Left ventricle myocardium superior (tissue), 1 donor: ENCODE measurements at regions of chr1 and their contacts with region 1.

Region 1: DNA sequence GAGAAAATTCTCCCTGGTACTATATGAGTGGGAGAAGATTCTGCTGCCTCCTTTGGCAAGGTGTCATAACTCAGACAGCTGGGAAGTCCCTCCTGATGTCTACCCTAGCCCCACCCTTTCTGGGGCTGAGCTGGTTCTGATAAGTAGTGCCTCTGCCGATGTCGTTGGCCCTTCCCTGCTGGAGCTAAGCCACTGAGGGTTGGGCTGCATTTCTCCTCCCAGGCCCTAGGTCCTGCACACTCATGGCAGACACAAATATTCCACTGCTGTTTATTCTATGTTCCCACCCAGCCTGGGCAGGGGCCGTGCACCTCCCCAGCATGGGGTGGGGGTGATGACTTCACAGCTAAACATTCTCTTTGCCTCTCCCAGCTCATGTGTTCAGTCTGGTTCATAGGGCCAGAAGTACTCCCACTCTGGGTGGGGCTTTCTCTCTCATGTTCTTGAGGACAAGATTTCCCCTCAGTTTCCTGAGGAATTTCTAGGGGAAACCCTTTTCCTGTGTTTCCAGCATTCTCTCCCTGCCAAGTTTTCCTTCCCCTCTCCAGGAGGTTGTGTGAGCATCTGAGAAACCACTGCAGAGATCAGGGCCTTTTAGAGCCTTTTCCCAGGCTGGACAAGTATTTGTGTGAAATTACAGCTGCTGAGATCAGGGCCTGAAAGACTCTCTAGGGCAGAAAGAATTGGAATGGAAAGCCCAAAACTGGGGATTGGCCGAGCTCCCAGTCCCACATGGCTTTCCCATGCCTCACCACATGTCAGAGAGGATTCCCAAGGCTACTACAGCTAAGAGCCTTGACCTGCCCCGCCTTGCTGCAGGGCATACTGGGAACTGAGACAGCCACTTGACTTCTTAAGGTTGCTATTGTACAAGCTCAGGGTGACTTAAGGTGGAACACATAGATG is 66.2 kb downstream of the ATP2B4 start:
- DNase-seq: peak; percentile 87
- ATAC-seq: peak; percentile 87

Region 2: DNA sequence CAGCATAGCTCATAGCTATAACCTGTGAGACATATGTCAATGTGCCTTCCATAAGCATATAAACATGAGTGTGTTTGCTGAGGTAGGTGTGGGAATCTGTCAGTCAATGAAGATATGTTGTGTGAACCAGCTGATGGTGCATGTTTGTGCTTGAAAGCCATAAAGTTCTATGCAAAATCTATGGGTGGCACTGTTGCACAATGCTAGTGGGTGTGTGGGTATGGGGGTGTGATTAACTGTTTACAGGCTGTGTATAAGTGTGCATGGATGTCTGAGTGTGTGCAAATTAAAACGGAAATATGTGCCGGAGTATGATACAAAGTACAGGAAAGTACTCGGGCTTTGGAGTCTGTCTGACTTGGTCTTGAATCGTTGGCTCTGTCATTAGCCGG is 67.2 kb before region 1 on chr1:
- intact Hi-C with region 1: loop called (anchors 5 kb)
- DNase-seq: no peak
- ATAC-seq: peak; percentile 43

Region 3: GRCh38 chr1:203663294-203663693 is 29.5 kb before region 1 on chr1:
- intact Hi-C with region 1: no loop called
- DNase-seq: no peak
- ATAC-seq: peak; percentile 53